GM18951 (cell line): ENCODE measurements at regions of chr9 and their contacts with region 1.

Region 1: GRCh38 chr9:13427587-13427986 is 148.1 kb upstream of the MPDZ start:
- POLR2A ChIP-seq: no peak

Region 2: DNA sequence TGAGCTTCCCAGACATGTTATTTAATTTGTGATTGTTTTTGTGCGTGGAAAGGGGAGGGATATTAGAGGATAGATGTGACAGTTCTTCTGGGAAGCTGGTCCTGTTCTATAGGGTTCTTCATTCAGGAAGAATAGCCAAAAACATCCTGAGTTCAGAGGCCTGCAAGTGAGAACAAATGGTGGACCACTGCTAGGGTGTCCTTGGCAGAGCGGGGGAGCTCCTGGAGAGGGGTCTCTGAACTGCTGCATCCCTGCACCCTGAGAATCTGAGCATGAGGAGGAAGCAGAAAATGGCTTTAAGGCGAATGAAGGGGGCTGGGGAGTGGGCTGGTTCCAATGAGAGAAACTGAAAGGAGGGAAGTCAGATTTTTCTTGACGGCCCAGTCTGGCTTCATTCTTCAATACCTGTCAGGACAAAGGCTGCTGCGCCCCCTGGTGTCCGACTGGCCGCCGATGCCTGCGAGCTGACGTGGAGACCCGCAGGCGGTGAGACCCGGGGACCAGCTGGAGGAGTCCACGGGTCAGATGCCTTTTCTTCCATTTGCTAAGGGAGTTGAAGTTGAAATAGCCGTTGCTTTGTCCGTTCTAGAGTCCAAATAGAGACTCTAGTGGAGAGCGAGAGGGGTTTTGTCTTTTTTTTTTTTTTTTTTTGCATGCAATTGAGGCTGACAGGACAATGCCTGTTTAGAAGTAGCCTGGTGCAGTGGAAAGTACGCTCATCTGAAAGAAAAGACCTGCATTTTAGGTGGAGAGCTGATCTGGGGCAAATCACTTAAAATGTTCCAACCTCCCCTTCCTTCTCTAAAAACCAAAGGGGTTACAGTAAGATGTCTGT is 925.9 kb after region 1 on chr9:
- in situ Hi-C with region 1: loop called (anchors 25 kb)
- POLR2A ChIP-seq: no peak

Region 3: DNA sequence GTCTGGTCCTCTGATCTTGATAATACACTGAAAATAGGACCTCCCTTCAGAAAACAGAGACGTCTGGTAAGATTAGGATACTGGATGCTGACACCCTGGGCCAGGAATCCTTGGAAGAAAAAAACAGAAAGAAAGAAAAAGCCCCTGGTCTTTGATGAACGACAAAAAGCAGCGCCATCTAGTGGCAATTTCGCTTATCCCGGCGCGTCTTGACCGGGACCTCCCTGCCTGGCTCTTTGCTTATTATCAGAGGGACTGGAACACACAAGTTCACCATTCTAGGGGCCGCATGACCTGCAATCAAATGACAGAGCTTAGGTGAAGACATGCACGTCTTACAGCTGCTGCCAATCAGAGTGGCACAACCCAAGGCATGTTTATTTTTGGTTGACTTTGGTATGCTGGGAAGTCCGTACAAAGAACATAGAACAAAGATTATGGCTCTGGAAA is 1001.2 kb after region 1 on chr9:
- in situ Hi-C with region 1: loop called (anchors 10 kb)
- POLR2A ChIP-seq: no peak